GM10248 (cell line): ENCODE measurements at regions of chr22 and their contacts with region 1.

Region 1: DNA sequence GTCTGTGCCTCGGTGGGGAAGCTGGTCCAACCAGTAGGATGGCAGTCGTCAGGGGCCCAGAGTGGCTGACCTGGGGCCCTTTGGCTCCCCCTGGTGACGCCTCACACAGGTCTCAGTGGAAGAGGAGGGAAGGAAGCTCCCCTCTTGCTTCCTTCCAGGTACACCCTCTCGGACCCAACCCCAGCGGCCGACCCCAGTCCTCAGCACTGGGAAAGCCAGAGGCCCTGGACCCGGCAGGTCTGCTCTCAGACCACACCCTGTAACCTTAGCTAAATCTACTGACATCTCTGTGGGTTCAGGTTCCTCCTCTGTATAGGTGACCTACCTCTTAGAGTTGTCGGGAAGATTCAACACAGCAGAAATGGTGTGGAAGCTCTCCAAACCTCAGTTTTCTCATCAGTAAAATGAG is 3.4 kb upstream of the SCUBE1 start:
- DNase-seq: peak; percentile 82
- CTCF ChIP-seq: peak; percentile 65

Region 2: DNA sequence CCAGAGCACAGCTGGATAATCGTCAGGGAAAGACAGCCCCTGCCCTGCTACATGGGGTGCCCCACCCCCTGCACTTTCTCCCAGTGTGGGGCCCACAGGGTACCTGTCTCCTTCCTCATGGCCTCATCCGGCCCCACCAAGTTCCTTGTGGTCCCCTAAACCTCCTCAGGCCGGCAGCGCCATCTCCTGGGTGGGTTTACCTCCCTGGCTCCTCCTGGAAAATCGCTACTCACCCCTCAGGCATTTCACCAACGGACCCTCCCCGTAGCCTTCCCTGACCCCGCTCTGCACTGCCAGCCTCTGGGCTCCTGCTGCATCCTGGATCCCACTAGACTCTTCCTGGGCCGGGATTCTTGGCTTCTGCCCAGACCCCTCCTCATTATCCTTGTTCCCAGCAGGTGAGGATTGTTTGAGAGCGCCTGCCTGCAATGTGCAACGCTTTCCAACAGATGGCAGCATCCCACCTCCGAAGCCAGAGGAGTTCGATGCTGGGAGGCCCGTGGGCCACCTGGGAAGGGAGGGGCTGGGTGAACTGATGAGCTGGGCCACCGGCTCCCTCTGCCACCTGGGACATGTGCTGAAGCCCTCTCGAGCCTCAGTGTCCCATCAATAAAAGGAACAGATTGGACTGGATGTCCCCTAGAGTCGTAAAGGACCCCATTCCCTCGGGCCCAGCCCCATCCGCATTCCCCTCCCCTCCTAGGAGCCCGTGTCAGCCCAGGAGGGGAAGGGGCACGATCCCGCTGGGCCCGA is 115.4 kb before region 1 on chr22:
- CTCF ChIA-PET with region 1: interaction called, 77 read pairs
- POLR2A ChIA-PET with region 1: no interaction called
- DNase-seq: peak; percentile 85
- CTCF ChIP-seq: peak; percentile 90

Region 3: GRCh38 chr22:43263645-43264514 is 82.6 kb before region 1 on chr22:
- CTCF ChIA-PET with region 1: interaction called, 118 read pairs
- POLR2A ChIA-PET with region 1: no interaction called
- DNase-seq: peak; percentile 85
- CTCF ChIP-seq: no peak

Region 4: DNA sequence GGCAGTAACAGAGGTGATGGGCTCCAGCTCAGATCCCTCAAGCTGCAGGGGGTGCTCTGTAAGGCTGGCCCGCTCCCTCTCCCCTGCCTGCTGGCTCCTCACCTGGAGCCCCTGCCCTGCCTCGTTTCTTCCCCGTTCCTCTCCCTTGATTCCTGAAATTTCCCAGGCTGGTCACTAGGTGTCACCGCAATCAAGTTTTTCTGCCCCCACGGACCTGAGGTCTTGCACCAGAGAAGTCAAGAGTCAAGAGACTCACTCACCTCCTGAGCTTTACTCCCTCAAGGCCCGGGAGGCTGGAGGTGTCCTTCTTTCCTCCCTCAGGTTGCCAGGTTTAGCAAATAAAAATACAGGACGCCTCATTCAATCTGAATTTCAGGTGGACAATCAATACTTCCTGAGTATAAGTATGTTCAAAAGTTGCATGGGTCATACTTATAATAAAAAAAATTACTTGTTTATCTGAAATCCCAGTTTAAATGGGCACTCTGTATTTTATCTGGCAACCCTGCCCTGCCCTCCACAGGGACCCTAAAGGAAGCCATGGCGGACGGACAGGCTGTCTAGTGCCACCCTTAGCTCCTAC is 72.5 kb before region 1 on chr22:
- CTCF ChIA-PET with region 1: interaction called, 118 read pairs
- POLR2A ChIA-PET with region 1: no interaction called
- DNase-seq: peak; percentile 84
- CTCF ChIP-seq: peak; percentile 79

Region 5: GRCh38 chr22:43330178-43331068 is 16.1 kb before region 1 on chr22:
- CTCF ChIA-PET with region 1: interaction called, 36 read pairs
- POLR2A ChIA-PET with region 1: no interaction called
- DNase-seq: no peak
- CTCF ChIP-seq: no peak

Region 6: DNA sequence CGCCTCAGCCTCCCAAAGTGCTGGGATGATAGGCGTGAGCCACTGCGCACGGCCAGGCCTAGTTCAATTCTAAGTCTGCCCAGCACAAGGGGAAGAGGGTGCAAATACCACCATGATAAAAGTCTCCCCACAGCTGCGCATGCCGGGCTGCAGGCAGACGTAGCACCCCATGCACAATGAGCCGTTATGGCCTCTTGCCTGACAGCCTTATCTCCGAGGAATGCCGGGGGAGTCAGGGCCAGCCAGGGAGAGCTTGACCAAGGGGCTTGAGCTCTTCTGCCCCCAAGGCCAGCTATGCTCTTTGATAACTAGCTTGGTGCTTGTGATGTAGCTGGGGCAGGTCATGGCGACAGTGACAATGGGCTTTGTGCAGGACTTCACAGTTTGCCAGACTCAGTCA is 10.4 kb after region 1 on chr22:
- CTCF ChIA-PET with region 1: interaction called, 27 read pairs
- POLR2A ChIA-PET with region 1: no interaction called
- DNase-seq: no peak
- CTCF ChIP-seq: no peak